Activated CD4-positive, alpha-beta T cell treated with anti-CD3 and anti-CD28 coated beads, Interleukin-2, amount 10 ng/mL, durations not matched to agents 7 days and 5 days (primary cell): ENCODE measurements at regions of chr6 and their contacts with region 1.

Region 1: DNA sequence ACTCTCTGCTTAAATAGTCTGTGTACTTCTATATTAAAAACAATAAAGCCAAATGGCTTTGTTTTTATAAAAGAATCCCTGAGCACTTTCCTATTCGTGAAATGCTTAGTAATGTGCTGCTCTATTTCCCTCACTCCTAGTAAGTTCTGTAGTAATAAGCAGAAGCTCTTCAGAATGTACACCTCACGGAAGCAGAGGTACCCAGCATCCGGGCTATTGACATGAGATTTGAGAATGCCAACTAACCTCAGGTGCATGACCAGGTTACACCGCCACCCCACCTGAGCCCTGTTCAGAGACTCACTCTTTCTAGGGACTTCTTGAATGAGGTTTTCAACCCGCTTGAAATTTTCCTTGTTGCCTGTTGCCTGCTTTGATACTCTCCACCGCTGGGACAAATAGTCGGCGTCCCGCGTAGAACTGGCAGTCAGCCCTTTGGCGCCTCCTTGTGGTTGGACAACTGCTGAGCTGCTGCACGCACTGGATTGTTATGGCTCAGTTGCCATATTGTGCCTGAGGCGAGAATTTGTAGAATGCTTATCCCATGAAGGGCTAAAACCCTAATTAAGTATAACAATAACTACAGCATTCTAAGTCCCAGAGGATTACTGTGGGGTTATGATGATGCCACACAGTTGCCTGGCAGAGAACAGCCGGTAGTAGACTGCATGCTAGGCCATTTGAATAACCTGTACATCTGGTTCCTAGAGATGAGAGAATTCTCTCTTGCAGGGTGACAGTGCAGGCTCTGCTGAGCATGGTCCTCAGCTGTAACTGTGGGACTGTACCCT is 95.4 kb downstream of the KHDC1L start:
- DNase-seq: peak; percentile 84
- H3K4me3 Mint-ChIP-seq: no peak overlapping the region
- H3K27ac Mint-ChIP-seq: no peak overlapping the region
- H3K4me1 Mint-ChIP-seq: peaks cover 6% of the 10 kb centered on the region
- H3K27me3 Mint-ChIP-seq: peaks cover 7% of the 10 kb centered on the region

Region 2: GRCh38 chr6:72616406-72617015 is 513.3 kb before region 1 on chr6:
- CTCF ChIA-PET with region 1: interaction called, 22 read pairs
- POLR2A ChIA-PET with region 1: no interaction called
- DNase-seq: peak; percentile 17
- H3K4me3 Mint-ChIP-seq: no peak overlapping the region
- H3K27ac Mint-ChIP-seq: no peak overlapping the region
- H3K4me1 Mint-ChIP-seq: peaks cover 31% of the 10 kb centered on the region
- H3K27me3 Mint-ChIP-seq: peaks cover 20% of the 10 kb centered on the region

Region 3: GRCh38 chr6:72622094-72622940 is 507.5 kb before region 1 on chr6:
- CTCF ChIA-PET with region 1: interaction called, 22 read pairs
- POLR2A ChIA-PET with region 1: no interaction called
- DNase-seq: peak; percentile 39
- H3K4me3 Mint-ChIP-seq: peak overlapping the region; percentile 82
- H3K27ac Mint-ChIP-seq: peak overlapping the region; percentile 86
- H3K4me1 Mint-ChIP-seq: peaks cover 45% of the 10 kb centered on the region
- H3K27me3 Mint-ChIP-seq: peaks cover 33% of the 10 kb centered on the region

Region 4: DNA sequence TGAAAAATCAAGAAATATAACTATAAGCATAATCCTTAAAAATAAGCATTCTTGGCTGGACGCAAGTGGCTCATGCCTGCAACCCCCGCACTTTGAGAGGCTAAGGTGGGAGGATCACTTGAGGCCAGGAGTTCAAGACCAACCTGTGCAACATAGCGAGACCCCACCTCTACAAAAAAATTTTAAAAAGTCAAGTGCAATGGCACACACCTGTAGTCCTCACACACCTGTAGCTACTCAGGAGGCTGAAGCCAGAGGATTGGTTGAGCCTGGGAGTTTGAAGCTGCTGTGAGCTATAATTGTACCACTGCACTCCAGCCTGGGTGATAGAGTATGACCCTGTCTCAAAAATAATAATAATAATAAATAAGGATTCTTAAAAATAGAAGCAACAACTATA is 13.5 kb before region 1 on chr6:
- CTCF ChIA-PET with region 1: no interaction called
- POLR2A ChIA-PET with region 1: no interaction called
- DNase-seq: no peak
- H3K4me3 Mint-ChIP-seq: no peak overlapping the region
- H3K27ac Mint-ChIP-seq: no peak overlapping the region
- H3K4me1 Mint-ChIP-seq: no peaks in the 10 kb centered on the region
- H3K27me3 Mint-ChIP-seq: no peaks in the 10 kb centered on the region

Region 5: DNA sequence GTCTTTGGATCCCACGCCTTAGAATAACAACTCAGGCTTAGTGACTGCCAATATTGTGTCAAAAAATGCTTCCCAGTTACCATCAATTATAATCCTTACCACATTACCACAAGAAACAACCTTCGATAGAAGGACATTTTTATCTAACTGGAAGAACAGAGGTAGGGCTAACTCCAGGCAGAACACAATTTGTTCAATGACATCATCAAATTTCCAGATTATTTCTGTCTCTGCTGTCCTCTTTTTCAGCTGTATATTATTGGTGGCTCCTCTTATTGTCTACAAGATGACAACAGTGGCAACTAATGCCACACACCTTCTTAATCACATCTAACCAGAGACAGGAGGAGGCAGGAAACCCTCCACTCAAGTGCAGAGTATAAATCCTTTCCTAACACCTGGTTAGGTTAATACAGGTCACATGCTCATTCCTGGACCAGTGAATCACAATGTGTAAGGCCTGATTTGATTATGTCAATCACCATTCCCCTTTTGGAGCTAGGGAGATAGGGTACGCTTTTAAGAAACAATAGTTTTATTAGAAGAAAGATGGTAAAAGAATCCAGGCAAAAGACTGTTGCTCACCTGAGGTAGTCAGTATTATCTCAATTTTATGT is 77.5 kb after region 1 on chr6:
- CTCF ChIA-PET with region 1: no interaction called
- POLR2A ChIA-PET with region 1: no interaction called
- DNase-seq: no peak
- H3K4me3 Mint-ChIP-seq: no peak overlapping the region
- H3K27ac Mint-ChIP-seq: no peak overlapping the region
- H3K4me1 Mint-ChIP-seq: no peaks in the 10 kb centered on the region
- H3K27me3 Mint-ChIP-seq: no peaks in the 10 kb centered on the region